ENCODE measurements at regions of chr1 and their contacts with region 1.

Region 1: GRCh38 chr1:101410048-101410878 is 173.4 kb downstream of the S1PR1 start:
- DNase-seq: peak; percentile 20
- CTCF ChIP-seq: no peak

Region 2: GRCh38 chr1:101371259-101371658 is 39.0 kb before region 1 on chr1:
- CTCF ChIA-PET with region 1: interaction called, 4 read pairs
- POLR2A ChIA-PET with region 1: interaction called, 11 read pairs
- DNase-seq: peak; percentile 71
- CTCF ChIP-seq: no peak

Region 3: DNA sequence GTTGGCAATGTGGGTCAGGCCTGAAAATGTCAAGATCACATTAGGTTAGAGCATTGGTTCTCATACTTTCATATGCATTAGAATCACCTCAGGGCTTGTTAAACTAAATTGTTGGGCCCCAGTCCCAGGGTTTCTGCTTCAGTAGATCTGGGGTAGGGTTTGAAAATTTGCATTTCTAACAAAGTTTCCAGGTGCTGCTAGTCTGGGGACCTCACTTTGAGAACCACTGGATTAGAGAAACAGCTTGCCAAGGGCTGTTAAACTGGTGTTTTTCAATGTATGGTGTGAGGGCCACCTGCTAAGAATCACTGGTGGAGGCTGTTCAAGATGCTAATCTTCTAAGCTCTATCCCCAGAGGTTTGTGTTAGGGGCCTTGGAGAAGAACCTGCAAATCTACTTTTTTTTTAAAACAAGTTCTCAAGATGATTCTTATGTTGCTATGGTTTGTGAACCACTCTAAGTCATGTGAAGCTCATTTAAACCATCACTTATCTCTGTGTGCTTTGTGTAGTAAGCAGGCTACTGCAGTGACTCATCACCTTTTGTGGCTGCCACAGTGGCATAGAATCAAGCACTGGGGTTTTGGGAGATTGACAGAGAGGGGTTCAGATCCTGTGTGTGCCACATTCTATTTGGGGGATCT is 21.2 kb before region 1 on chr1:
- CTCF ChIA-PET with region 1: interaction called, 121 read pairs
- POLR2A ChIA-PET with region 1: interaction called, 75 read pairs
- DNase-seq: peak; percentile 23
- CTCF ChIP-seq: no peak

Region 4: GRCh38 chr1:101420406-101420805 is 10.1 kb after region 1 on chr1:
- CTCF ChIA-PET with region 1: interaction called, 24 read pairs
- POLR2A ChIA-PET with region 1: no interaction called
- DNase-seq: no peak
- CTCF ChIP-seq: no peak

Region 5: GRCh38 chr1:101438359-101438758 is 28.1 kb after region 1 on chr1:
- CTCF ChIA-PET with region 1: interaction called, 85 read pairs
- POLR2A ChIA-PET with region 1: interaction called, 3 read pairs
- DNase-seq: peak; percentile 38
- CTCF ChIP-seq: peak; percentile 58